ENCODE measurements at regions of chr21 and their contacts with region 1.

Region 1: DNA sequence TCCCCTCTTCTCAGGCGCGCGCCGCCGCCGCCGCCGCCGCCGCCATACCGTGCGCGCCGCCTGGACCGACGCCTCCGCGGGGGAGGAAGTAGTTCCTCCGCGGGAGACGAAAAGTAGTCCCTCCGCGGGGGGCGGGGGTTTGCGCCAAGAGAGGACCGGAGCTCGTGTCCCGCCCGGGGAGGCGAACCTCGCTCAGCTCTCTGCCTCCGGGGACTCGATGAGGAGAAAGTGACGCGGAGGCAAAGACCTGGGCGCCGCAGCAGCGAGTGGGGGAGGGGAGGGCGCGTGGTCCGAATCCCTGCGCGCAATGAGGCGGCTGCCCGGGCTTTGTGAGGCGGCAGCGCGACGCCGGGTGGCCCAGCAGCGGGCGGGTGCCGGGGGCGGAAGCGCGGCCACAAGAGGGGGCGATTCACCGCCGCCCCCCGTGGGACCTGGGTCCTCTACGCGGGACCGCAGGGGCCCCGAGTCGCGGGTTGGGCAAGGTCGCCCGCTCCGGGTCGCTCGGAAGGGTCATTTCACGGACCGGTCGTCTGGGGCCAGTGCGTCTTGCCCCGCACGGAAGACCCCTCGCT is at the start of gene BRWD1:
- DNase-seq: peak; percentile 26 to 88 (median 78)

Region 2: GRCh38 chr21:39183237-39184007 is 130.2 kb before region 1 on chr21 and contains the start of gene PSMG1:
- intact Hi-C with region 1: loop called (anchors 5 kb)
- DNase-seq: peak; percentile 73 to 96 (median 92)

Region 3: GRCh38 chr21:39349211-39350093 is 35.8 kb after region 1 on chr21:
- intact Hi-C with region 1: loop called (anchors 2 kb)
- DNase-seq: peak; percentile 92 to 99 (median 97)

Measured in head of caudate nucleus (tissue), 42 donors.